ENCODE measurements at regions of chr1 and their contacts with region 1.

Region 1: GRCh38 chr1:35715568-35716002 is 3.1 kb downstream of the C1orf216 start:
- DNase-seq: peak; percentile 79
- H3K4me3 ChIP-seq: no peak overlapping the region
- H3K27ac ChIP-seq: no peak overlapping the region
- H3K4me1 ChIP-seq: peaks cover 0 to 43% (median 37%) of the 10 kb centered on the region in 4 donors
- H3K27me3 ChIP-seq: no peaks in the 10 kb centered on the region
- CTCF ChIP-seq: peak; percentile 28 to 79 (median 66)
- EP300 ChIP-seq: no peak
- POLR2A ChIP-seq: no peak

Region 2: DNA sequence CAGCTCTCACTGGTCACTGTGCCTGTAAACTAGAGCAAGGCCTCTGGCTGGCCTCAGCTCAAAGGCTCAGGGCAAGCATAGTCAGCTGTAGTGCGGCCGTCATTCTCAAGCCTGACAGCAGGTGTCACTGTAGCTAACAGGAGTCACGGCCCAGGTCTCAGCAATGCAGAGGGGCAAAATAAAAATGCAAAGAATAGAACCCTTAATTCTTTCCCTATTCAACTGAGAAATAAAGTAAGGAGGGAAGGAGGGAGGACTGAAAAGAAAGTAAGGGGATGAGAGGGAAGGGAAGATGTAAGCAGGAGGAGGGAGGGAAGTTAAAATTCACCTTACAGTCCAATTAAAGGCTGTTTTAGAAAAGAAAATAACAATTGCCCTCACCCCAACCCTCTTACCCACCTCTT is 264.5 kb before region 1 on chr1:
- intact Hi-C with region 1: loop called (anchors 5 kb)
- DNase-seq: peak; percentile 86
- H3K4me3 ChIP-seq: no peak overlapping the region
- H3K27ac ChIP-seq: peak overlapping the region; percentile 37 to 69 (median 56)
- H3K4me1 ChIP-seq: peaks cover 0 to 38% (median 28%) of the 10 kb centered on the region in 4 donors
- H3K27me3 ChIP-seq: no peaks in the 10 kb centered on the region
- CTCF ChIP-seq: peak; percentile 67 to 81 (median 75)
- EP300 ChIP-seq: no peak
- POLR2A ChIP-seq: no peak

Region 3: GRCh38 chr1:35564037-35564883 is 151.3 kb before region 1 on chr1:
- intact Hi-C with region 1: loop called (anchors 2 kb)
- DNase-seq: peak; percentile 85
- H3K4me3 ChIP-seq: no peak overlapping the region
- H3K27ac ChIP-seq: no peak overlapping the region
- H3K4me1 ChIP-seq: peaks cover 0 to 23% (median 20%) of the 10 kb centered on the region in 4 donors
- H3K27me3 ChIP-seq: no peaks in the 10 kb centered on the region
- CTCF ChIP-seq: peak; percentile 42 to 73 (median 59)
- EP300 ChIP-seq: no peak
- POLR2A ChIP-seq: no peak

Region 4: DNA sequence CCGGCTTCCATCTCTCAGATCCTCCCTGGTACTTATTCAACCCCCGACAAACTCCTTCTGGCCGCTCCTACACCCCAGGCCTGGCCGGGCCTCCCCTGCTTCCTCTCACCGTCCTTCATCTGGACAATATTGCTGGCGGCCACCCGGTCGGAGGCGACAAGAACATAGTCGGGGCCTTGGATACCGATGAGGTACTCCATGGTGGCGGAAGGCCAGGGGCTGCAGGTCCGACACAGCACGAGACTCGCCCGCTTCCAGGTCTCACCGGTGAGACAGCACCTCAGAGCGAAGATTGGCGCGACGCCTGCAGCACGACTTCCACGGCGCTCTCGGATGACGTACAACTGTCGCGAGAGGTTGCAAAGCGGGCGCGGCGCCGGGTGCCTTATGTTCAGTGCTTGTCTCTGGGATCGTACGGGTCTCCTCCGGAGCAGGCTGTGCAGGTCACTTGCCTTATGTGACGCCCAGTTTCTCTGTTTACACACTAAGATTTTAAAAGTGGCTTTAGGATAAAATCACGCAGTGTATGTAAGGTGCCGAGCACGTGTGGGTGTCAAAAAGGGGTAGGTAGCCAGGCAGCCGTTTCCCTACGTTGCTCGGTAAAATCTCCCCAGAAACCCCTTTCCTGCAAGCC is 74.2 kb before region 1 on chr1 and contains the start of gene PSMB2:
- intact Hi-C with region 1: loop called (anchors 2 kb)
- DNase-seq: peak; percentile 98
- H3K4me3 ChIP-seq: peak within 1 kb of the TSS; percentile 65 to 87 (median 74)
- H3K27ac ChIP-seq: peak within 1 kb of the TSS; percentile 88 to 95 (median 90)
- H3K4me1 ChIP-seq: peaks cover 0 to 49% (median 44%) of the 10 kb centered on the region in 4 donors
- H3K27me3 ChIP-seq: peaks cover 0 to 5% (median 0%) of the 10 kb centered on the region in 3 donors
- CTCF ChIP-seq: no peak
- EP300 ChIP-seq: peak in 1 of 4 donors; percentile 58
- POLR2A ChIP-seq: peak; percentile 66 to 71
- total RNA-seq, gene PSMB2: 29.3 to 34.2 (median 31.0) TPM

Measured in sigmoid colon (tissue), 7 donors.